Panc1 (cell line): ENCODE measurements at regions of chr10 and their contacts with region 1.

Region 1: DNA sequence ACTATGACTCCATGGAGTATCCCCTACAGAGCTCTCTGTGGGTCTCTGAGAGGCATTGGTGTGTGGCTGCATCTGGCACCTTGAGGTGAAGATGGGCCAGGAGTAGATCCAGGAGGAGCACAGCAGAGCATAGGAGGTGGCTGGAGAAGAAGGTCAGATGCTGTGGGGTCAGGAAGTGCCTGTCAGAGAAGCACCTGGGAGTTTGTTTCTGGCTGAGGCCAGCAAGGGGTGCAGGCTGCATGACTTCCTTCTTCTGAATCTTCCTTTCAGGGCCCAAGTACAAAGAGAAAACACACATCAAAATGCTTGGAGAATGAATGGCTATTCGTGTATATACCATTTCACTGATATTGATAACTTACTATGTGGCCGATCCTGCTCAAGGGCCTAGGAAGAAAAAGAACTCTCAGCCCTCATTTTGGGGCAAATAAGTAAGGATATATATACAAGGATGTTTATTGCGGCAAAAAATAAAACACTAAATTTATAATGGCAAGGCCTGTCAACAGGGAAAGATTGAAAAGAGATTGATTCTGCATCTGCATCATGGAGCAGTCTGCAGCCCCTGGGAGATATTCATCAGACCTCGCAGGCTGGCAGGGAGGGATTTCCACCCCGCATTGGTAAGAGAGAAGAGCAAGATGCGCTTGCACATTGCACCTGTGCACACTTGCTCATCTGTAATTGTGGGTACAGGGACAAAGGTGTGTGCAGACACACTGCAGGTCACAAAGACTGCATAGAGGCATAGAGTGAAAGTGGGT is 39.2 kb downstream of the PTPRE start:
- DNase-seq: no peak
- ATAC-seq: no peak
- H3K4me3 ChIP-seq: no peak overlapping the region
- H3K27ac ChIP-seq: no peak overlapping the region
- H3K4me1 ChIP-seq: no peaks in the 10 kb centered on the region
- H3K27me3 ChIP-seq: peaks cover 17% of the 10 kb centered on the region
- CTCF ChIP-seq: no peak

Region 2: GRCh38 chr10:127973791-127974311 is 27.7 kb after region 1 on chr10:
- CTCF ChIA-PET with region 1: interaction called, 10 read pairs
- POLR2A ChIA-PET with region 1: no interaction called
- in situ Hi-C with region 1: no loop called
- intact Hi-C with region 1: no loop called
- DNase-seq: no peak
- ATAC-seq: no peak
- H3K4me3 ChIP-seq: no peak overlapping the region
- H3K27ac ChIP-seq: no peak overlapping the region
- H3K4me1 ChIP-seq: no peaks in the 10 kb centered on the region
- H3K27me3 ChIP-seq: peaks cover 2% of the 10 kb centered on the region; the same call in 1 of the 2 replicates
- CTCF ChIP-seq: no peak